ENCODE measurements at regions of chr11 and their contacts with region 1.

Region 1: DNA sequence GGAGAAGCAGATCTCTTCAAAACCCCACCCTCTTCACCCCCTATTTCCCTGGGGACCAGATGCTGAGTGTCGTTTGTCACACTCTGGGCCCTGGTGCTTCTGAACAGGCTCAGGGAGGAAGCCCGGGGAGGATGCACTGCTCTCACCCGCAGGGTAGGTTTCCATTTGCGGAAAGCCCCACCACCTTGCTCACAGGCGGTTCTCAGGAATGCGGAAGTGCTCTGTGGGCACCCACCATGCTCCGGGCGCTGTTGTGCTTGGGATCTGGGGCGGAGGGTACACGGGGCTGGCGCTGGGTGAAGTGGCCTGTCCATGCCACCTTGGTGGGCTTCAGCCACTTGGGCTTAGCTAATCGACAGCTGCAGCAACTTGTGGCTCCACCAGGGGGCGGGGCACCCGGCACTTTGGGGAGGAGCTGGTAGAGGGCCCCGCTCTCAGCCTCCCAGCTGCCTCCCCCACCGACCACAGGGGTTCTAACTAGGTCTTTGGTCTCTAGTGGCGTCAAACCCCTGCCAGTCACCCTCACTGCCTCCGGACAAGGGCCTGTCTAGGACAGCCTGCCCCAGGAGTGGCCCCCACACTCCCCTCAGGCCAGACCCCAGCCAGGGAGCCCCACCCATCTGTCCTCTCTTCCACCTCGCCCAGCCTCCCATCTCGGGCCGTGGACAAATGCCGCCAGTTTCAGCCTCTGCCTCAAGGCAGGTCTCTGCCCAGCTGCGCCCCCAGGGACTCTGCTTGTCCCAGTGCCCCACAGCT is 7.4 kb downstream of the NDUFV1 start:
- DNase-seq: no peak
- ATAC-seq: peak; percentile 59
- H3K4me3 ChIP-seq: no peak overlapping the region
- H3K27ac ChIP-seq: peak overlapping the region; percentile 28
- H3K4me1 ChIP-seq: peaks cover 45% of the 10 kb centered on the region
- H3K27me3 ChIP-seq: no peaks in the 10 kb centered on the region
- CTCF ChIP-seq: peak; percentile 80
- EP300 ChIP-seq: no peak
- POLR2A ChIP-seq: no peak
- RAD21 ChIP-seq: peak; percentile 64

Region 2: GRCh38 chr11:67630228-67630942 is 16.2 kb after region 1 on chr11:
- CTCF ChIA-PET with region 1: interaction called, 16 read pairs
- POLR2A ChIA-PET with region 1: interaction called, 52 read pairs
- in situ Hi-C with region 1: no loop called
- intact Hi-C with region 1: no loop called
- DNase-seq: peak; percentile 92
- ATAC-seq: peak; percentile 67
- H3K4me3 ChIP-seq: peak overlapping the region; percentile 49 to 86 (median 71)
- H3K27ac ChIP-seq: peak overlapping the region; percentile 84
- H3K4me1 ChIP-seq: peaks cover 64% of the 10 kb centered on the region
- H3K27me3 ChIP-seq: no peaks in the 10 kb centered on the region; a peak in 2 of 5 replicates
- CTCF ChIP-seq: peak; percentile 97
- EP300 ChIP-seq: 0 out of 4 replicates have a peak, but pooled peaks of 1 of the 2 experiments have one; percentile 41
- POLR2A ChIP-seq: peak in 1 of 2 experiments; percentile 65; a peak in 2 of 4 replicates
- RAD21 ChIP-seq: peak; percentile 84; the same call in 1 of the 2 replicates

Region 3: GRCh38 chr11:67640021-67640757 is 26.1 kb after region 1 on chr11:
- CTCF ChIA-PET with region 1: interaction called, 7 read pairs
- POLR2A ChIA-PET with region 1: no interaction called
- in situ Hi-C with region 1: no loop called
- intact Hi-C with region 1: loop called (anchors 1 kb)
- DNase-seq: peak; percentile 55
- ATAC-seq: peak; percentile 84
- H3K4me3 ChIP-seq: no peak overlapping the region
- H3K27ac ChIP-seq: no peak overlapping the region
- H3K4me1 ChIP-seq: peaks cover 17% of the 10 kb centered on the region
- H3K27me3 ChIP-seq: peaks cover 0 to 9% of the 10 kb centered on the region in 2 experiments; a peak in 3 of 5 replicates
- CTCF ChIP-seq: peak; percentile 84
- EP300 ChIP-seq: no peak
- POLR2A ChIP-seq: no peak
- RAD21 ChIP-seq: peak; percentile 65

Measured in HepG2 (cell line).